ENCODE measurements at regions of chr11 and their contacts with region 1.

Region 1: DNA sequence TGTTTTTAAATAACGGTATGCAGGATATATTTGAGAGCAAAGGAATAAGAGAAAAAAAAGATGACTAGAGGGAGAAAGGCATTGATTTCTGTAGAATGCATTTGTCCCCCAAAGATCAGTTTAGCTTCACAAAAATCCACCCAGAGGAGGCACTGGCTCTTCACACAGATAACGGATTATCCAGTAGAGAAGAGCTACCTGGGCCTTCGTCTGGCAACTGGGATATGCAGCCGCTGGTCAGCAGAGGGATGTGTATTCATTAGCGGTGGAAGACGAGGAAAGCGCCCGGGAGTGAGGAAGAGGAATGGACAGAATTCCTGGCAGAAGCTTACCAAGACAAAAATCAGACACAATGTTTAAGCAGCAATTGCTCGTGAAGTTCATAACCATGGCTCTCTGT is 5.6 kb upstream of the WT1 start:
- DNase-seq: no peak
- H3K4me3 ChIP-seq: no peak overlapping the region
- H3K27ac ChIP-seq: no peak overlapping the region
- H3K4me1 ChIP-seq: peaks cover 2 to 21% (median 12%) of the 10 kb centered on the region in 4 experiments
- H3K27me3 ChIP-seq: peaks cover 60 to 73% (median 67%) of the 10 kb centered on the region in 4 experiments
- CTCF ChIP-seq: no peak
- EP300 ChIP-seq: no peak
- POLR2A ChIP-seq: no peak
- RAD21 ChIP-seq: peak in 1 of 2 experiments; percentile 8; a peak in 1 of 4 replicates

Region 2: GRCh38 chr11:32366666-32367065 is 74.2 kb before region 1 on chr11:
- CTCF ChIA-PET with region 1: no interaction called
- POLR2A ChIA-PET with region 1: no interaction called
- DNase-seq: no peak
- H3K4me3 ChIP-seq: no peak overlapping the region
- H3K27ac ChIP-seq: no peak overlapping the region
- H3K4me1 ChIP-seq: no peaks in the 10 kb centered on the region
- H3K27me3 ChIP-seq: no peaks in the 10 kb centered on the region
- CTCF ChIP-seq: no peak
- EP300 ChIP-seq: no peak
- POLR2A ChIP-seq: no peak
- RAD21 ChIP-seq: no peak

Region 3: DNA sequence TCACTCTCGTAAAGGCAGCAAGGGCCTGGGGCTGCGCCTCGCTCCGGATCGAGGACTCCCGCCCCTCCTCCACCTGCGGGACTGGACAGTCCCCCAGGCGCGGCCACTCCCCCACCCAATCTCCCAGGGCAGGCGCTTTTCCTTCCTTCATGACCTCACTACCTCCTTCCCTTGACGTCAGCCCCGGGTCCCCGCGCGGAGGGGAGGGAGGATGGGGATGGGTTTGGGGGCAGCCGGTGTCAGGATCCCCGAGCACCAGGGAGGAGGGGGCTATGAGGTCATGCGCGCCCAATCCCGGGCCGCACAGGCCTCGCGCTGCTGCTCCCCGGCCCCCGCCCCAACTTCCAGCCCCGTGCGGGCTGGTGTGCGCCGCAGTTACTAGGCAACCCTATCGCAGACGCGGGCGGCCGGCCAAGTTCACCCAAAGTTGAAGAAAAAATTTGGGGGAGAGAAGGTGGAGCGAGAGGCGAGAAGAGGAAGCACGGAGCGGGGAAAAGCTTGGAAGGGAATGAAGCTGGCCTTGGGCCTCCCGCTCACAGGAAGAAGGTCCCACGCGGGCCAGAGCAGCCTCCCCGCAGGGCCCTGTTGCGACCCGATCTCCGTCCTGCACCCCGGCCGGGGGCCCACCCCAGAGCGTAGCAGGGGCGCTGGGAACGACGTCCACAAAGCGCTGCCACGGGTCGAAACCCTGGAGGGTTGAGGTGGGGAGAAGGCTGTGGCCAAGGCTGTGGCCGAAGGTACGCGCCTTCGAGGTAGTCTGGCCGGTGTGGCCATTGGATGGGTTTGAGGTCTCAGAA is 13.9 kb before region 1 on chr11:
- CTCF ChIA-PET with region 1: interaction called, 20 read pairs
- POLR2A ChIA-PET with region 1: interaction called, 17 read pairs
- DNase-seq: peak in 1 of 2 experiments; percentile 77
- H3K4me3 ChIP-seq: peak overlapping the region; percentile 27 to 57 (median 28)
- H3K27ac ChIP-seq: no peak overlapping the region
- H3K4me1 ChIP-seq: peaks cover 0 to 26% (median 11%) of the 10 kb centered on the region in 4 experiments; a peak in 6 of 7 replicates
- H3K27me3 ChIP-seq: peaks cover 62 to 81% (median 75%) of the 10 kb centered on the region in 4 experiments
- CTCF ChIP-seq: no peak
- EP300 ChIP-seq: no peak
- POLR2A ChIP-seq: no peak
- RAD21 ChIP-seq: no peak

Region 4: DNA sequence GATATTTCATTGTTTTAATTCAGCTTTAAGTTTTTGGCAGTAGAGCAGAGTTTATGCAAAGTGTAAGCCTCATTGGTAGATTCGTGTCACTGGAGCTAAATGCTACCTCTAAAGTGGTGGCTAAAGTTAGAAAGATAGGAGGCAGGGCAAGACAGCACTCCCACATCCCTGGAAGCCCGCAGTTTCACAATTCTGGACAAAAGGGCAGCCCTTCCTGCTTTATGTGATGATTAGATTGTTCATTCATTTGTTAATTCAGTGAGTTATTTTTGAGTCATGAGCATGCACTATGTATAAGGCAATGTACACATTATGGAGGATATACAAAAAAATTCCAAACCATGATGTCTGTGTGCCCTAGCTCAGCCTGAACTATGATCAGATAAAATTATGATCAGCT is 90.6 kb after region 1 on chr11:
- CTCF ChIA-PET with region 1: no interaction called
- POLR2A ChIA-PET with region 1: no interaction called
- DNase-seq: no peak
- H3K4me3 ChIP-seq: no peak overlapping the region
- H3K27ac ChIP-seq: no peak overlapping the region
- H3K4me1 ChIP-seq: no peaks in the 10 kb centered on the region
- H3K27me3 ChIP-seq: no peaks in the 10 kb centered on the region
- CTCF ChIP-seq: no peak
- EP300 ChIP-seq: no peak
- POLR2A ChIP-seq: no peak
- RAD21 ChIP-seq: no peak